ENCODE measurements at regions of chr10 and their contacts with region 1.

Region 1: GRCh38 chr10:101018600-101019439 is 12.1 kb downstream of the PDZD7 start:
- DNase-seq: peak in 1 of 2 experiments; percentile 97
- H3K4me3 ChIP-seq: peak overlapping the region; percentile 33 to 59 (median 42); a peak in 7 of 8 replicates
- H3K27ac ChIP-seq: no peak overlapping the region
- H3K4me1 ChIP-seq: peaks cover 0 to 10% (median 5%) of the 10 kb centered on the region in 4 experiments; a peak in 4 of 7 replicates
- H3K27me3 ChIP-seq: peaks cover 14 to 42% (median 32%) of the 10 kb centered on the region in 4 experiments
- CTCF ChIP-seq: peak; percentile 82 to 92 (median 86)
- EP300 ChIP-seq: no peak
- POLR2A ChIP-seq: no peak
- RAD21 ChIP-seq: peak; percentile 71 to 80

Region 2: DNA sequence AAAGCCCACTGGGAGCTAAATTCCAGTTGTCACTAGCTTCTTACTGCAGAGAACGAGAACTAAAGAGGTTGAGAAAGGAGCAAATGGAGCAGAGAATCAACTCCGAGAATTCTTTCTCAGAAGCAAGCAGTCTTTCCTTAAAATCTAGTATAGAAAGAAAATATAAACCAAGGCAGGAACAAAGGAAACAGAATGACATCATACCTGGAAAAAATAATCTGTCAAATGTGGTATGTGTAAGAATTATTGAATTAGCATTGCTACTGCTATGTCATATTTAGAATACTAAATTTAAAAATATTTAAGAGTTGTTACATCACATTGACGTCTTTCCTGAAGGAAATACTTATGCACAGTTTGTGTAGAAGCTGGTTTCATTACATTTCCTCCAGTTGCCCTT is 101.7 kb before region 1 on chr10:
- CTCF ChIA-PET with region 1: no interaction called
- POLR2A ChIA-PET with region 1: no interaction called
- DNase-seq: no peak
- H3K4me3 ChIP-seq: no peak overlapping the region
- H3K27ac ChIP-seq: no peak overlapping the region
- H3K4me1 ChIP-seq: peaks cover 0 to 6% (median 0%) of the 10 kb centered on the region in 4 experiments; a peak in 1 of 7 replicates
- H3K27me3 ChIP-seq: no peaks in the 10 kb centered on the region
- CTCF ChIP-seq: no peak
- EP300 ChIP-seq: no peak
- POLR2A ChIP-seq: no peak
- RAD21 ChIP-seq: no peak

Region 3: DNA sequence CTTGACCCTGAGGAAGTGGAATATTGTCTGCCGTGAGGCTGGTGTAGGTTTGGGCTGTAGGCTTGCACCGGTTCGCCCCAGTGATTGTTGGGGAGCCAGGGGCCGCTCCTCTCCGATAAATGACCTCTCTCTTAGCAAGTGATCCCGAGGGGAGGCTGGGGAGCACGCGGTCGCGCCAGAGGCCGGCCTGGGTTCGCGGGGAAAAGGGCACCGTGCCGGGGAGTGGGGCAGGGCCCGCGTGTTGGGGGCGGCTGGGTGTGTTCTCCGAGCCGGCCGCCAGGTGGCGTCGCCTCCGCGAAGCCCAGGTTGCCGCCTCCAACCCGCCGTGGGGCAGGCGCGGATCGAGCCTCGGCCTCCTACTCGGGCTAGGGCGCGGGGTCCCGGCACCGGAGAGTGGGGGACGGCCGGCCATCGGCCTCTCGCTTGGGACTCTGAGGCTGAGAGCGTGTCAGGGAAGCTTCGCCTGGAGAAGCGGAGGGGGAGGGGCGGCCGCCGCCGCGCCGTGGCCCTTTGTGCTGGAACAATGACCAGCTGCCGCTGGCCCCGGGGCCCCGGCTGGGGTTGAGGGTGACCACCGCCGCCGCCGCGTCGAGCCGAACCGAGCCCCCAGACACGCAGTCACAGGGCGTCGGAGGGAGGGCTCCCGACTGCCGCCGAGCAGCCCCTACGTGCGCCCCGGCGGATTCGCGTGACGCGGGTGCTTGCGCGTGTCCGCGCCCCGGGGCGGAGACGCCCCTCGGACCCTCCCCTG is 19.7 kb before region 1 on chr10:
- CTCF ChIA-PET with region 1: interaction called, 464 read pairs
- POLR2A ChIA-PET with region 1: interaction called, 81 read pairs
- DNase-seq: peak in 1 of 2 experiments; percentile 87
- H3K4me3 ChIP-seq: peak overlapping the region; percentile 75 to 90 (median 76)
- H3K27ac ChIP-seq: peak overlapping the region; percentile 80; the same call in 1 of the 2 replicates
- H3K4me1 ChIP-seq: peaks cover 4 to 24% (median 14%) of the 10 kb centered on the region in 4 experiments
- H3K27me3 ChIP-seq: no peaks in the 10 kb centered on the region
- CTCF ChIP-seq: peak in 2 of 3 experiments; percentile 69 to 87; a peak in 3 of 4 replicates
- EP300 ChIP-seq: 0 out of 3 replicates have a peak, but pooled peaks of 1 of the 2 experiments have one; percentile 32
- POLR2A ChIP-seq: peak in 1 of 2 experiments; percentile 71; a peak in 1 of 3 replicates
- RAD21 ChIP-seq: peak; percentile 22 to 50; a peak in 2 of 4 replicates

Region 4: DNA sequence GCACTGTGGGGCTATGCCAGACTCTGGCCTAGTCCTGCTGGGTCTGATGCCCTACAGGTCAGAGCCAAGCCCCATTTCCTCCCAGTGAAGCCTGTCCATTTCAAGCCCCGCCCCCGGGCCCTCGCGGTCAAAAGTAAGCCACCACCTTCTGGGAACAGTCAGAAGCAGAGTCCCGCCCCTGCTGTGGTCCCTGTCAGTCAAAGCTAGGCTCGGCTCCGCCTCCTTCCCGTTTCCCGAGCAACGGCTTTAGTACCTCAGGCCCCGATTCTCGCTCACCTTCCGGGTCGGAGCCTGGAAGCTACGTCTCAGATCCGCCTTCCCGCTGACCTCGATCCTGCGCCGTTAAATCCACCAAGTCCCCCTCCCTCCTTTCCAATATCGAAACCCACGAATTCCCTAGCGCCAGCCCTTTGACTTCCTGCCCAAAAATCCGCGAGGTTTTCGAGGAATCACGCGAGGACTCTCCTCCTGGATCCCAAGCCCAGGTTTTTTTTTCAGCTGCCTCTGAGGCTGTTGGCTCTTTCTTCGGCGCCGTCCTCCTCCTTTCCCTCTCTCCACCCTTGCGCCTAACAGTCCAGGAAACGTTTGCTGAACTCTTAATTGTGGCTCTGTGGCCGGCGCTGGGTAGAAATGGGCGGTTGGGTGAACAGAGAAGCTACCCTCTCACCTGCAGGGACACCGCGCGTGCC is 24.0 kb after region 1 on chr10:
- CTCF ChIA-PET with region 1: interaction called, 2,176 read pairs
- POLR2A ChIA-PET with region 1: interaction called, 4 read pairs
- DNase-seq: peak; percentile 90 to 97
- H3K4me3 ChIP-seq: peak overlapping the region; percentile 65 to 82 (median 73)
- H3K27ac ChIP-seq: no peak overlapping the region
- H3K4me1 ChIP-seq: peaks cover 3 to 24% (median 13%) of the 10 kb centered on the region in 4 experiments
- H3K27me3 ChIP-seq: peaks cover 20 to 42% (median 36%) of the 10 kb centered on the region in 4 experiments
- CTCF ChIP-seq: no peak
- EP300 ChIP-seq: no peak
- POLR2A ChIP-seq: no peak
- RAD21 ChIP-seq: no peak

Region 5: GRCh38 chr10:101060036-101060950 is 41.5 kb after region 1 on chr10:
- CTCF ChIA-PET with region 1: interaction called, 2,176 read pairs
- POLR2A ChIA-PET with region 1: interaction called, 3 read pairs
- DNase-seq: peak in 1 of 2 experiments; percentile 95
- H3K4me3 ChIP-seq: peak overlapping the region; percentile 89 to 97 (median 94)
- H3K27ac ChIP-seq: peak overlapping the region; percentile 76
- H3K4me1 ChIP-seq: peaks cover 0 to 26% (median 16%) of the 10 kb centered on the region in 4 experiments; a peak in 6 of 7 replicates
- H3K27me3 ChIP-seq: peaks cover 35 to 42% (median 39%) of the 10 kb centered on the region in 4 experiments
- CTCF ChIP-seq: peak; percentile 85 to 89 (median 86)
- EP300 ChIP-seq: no peak
- POLR2A ChIP-seq: no peak; a peak in 1 of 3 replicates
- RAD21 ChIP-seq: peak; percentile 77 to 83

Region 6: GRCh38 chr10:101095542-101096213 is 76.9 kb after region 1 on chr10:
- CTCF ChIA-PET with region 1: interaction called, 2,176 read pairs
- POLR2A ChIA-PET with region 1: interaction called, 5 read pairs
- DNase-seq: peak; percentile 96
- H3K4me3 ChIP-seq: peak overlapping the region in 1 of 4 experiments; percentile 19; a peak in 1 of 8 replicates
- H3K27ac ChIP-seq: no peak overlapping the region
- H3K4me1 ChIP-seq: peaks cover 3 to 15% (median 8%) of the 10 kb centered on the region in 4 experiments; a peak in 5 of 7 replicates
- H3K27me3 ChIP-seq: peaks cover 0 to 25% (median 10%) of the 10 kb centered on the region in 4 experiments; a peak in 4 of 7 replicates
- CTCF ChIP-seq: peak; percentile 89 to 99 (median 92)
- EP300 ChIP-seq: no peak
- POLR2A ChIP-seq: no peak
- RAD21 ChIP-seq: peak; percentile 68 to 83